ENCODE measurements at regions of chr14 and their contacts with region 1.

Region 1: GRCh38 chr14:24366721-24367513 is 1.1 kb upstream of the NFATC4 start:
- DNase-seq: peak; percentile 87
- H3K4me3 ChIP-seq: peak overlapping the region; percentile 24 to 54 (median 31)
- H3K27ac ChIP-seq: peak overlapping the region; percentile 90
- H3K4me1 ChIP-seq: peaks cover 27% of the 10 kb centered on the region
- H3K27me3 ChIP-seq: peaks cover 0 to 2% of the 10 kb centered on the region in 2 experiments
- CTCF ChIP-seq: no peak
- POLR2A ChIP-seq: peak; percentile 32

Region 2: DNA sequence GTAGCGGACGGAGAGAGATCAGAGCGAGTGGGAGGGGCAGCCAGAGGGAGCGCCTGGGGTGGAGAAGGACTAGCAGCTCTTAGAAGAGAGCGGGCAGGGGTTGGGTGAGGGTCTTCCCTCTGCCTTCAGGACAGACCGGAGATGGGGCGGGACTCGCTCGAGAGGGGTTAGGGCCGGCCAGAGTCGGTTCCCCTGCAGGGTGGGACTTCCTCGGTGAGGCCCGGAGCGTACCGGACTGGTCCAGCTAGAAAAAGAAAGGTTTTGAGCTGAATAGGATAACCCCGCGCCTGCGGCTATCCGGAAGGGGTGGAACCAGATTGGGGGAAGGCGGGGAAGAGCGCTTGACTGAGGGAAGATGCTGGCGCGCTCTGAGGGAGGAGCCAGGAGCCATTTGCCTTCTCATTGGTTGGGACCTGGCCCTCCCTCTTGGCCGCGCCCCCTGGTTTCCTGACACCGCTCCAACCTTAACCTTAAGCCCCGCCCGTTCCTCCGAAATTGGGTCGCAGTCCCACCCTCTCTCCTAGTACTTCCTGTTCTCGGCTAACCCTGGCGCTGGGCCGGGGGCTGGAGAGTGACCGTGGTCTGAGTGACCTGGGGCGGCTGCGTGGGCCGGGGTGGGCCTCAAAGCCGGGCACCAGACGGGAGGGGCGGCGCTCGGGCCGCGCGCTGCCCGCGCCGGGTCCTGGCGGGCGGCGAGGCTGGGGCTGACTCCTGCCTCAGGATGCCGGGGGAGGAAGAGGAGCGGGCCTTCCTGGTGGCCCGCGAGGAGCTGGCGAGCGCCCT is 219.7 kb before region 1 on chr14 and contains the start of gene RNF31:
- CTCF ChIA-PET with region 1: no interaction called
- POLR2A ChIA-PET with region 1: no interaction called
- dilution Hi-C with region 1: no loop called
- intact Hi-C with region 1: loop called (anchors 5 kb)
- DNase-seq: peak; percentile 97
- H3K4me3 ChIP-seq: peak within 1 kb of the TSS; percentile 59 to 86 (median 79)
- H3K27ac ChIP-seq: peak within 1 kb of the TSS; percentile 52
- H3K4me1 ChIP-seq: peaks cover 17% of the 10 kb centered on the region
- H3K27me3 ChIP-seq: no peaks in the 10 kb centered on the region
- CTCF ChIP-seq: no peak
- POLR2A ChIP-seq: peak; percentile 75
- total RNA-seq, gene RNF31: 66.5 and 69.7 TPM in 2 replicates

Region 3: GRCh38 chr14:24332268-24332993 is 34.5 kb before region 1 on chr14:
- CTCF ChIA-PET with region 1: interaction called, 69 read pairs
- POLR2A ChIA-PET with region 1: interaction called, 7 read pairs
- dilution Hi-C with region 1: no loop called
- intact Hi-C with region 1: loop called (anchors 1 kb)
- DNase-seq: peak; percentile 45
- H3K4me3 ChIP-seq: no peak overlapping the region
- H3K27ac ChIP-seq: no peak overlapping the region
- H3K4me1 ChIP-seq: peaks cover 29% of the 10 kb centered on the region
- H3K27me3 ChIP-seq: no peaks in the 10 kb centered on the region
- CTCF ChIP-seq: peak; percentile 55 to 72
- POLR2A ChIP-seq: no peak

Region 4: GRCh38 chr14:24351517-24351916 is 15.4 kb before region 1 on chr14:
- CTCF ChIA-PET with region 1: interaction called, 16 read pairs
- POLR2A ChIA-PET with region 1: no interaction called
- dilution Hi-C with region 1: no loop called
- intact Hi-C with region 1: no loop called
- DNase-seq: peak; percentile 18
- H3K4me3 ChIP-seq: no peak overlapping the region
- H3K27ac ChIP-seq: no peak overlapping the region
- H3K4me1 ChIP-seq: no peaks in the 10 kb centered on the region
- H3K27me3 ChIP-seq: peaks cover 30 to 35% of the 10 kb centered on the region in 2 experiments
- CTCF ChIP-seq: peak in 1 of 2 donors; percentile 5
- POLR2A ChIP-seq: no peak

Region 5: DNA sequence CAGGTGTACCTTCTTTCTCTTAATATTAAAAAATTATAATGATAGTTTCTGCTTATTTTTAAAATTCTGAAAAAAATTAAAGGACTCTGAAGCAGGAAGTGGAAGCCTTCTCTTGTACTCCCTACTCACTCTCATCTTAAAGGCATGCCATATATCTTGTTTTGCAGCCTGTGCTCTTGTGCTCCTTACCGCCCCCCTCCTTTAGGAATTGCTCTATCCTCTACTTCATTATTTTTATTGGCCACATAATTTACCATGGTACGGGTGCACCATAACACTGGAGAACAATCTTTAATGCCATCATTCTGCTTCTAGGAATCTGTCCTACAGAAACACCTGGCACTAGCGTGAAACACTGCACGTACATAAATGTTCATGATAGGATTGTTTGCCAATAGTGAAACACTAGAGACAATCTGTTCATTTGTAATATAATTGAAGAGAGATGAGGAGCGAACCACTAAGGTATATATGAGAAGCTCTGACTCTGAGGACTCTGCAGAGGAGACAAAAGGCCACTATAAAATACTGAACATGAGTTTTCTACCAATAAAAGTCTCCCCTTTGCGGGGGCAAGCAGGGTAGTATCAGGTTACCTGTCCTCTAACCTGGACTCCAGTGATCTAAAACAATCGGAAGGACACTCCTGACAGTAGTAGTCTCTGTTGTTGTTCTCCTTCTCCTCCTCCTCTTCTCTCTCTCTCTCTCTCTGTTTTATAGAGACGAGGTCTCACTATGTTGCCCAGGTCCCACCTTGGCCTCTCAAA is 25.6 kb after region 1 on chr14:
- CTCF ChIA-PET with region 1: interaction called, 13 read pairs
- POLR2A ChIA-PET with region 1: no interaction called
- dilution Hi-C with region 1: no loop called
- intact Hi-C with region 1: loop called (anchors 1 kb)
- DNase-seq: peak; percentile 70
- H3K4me3 ChIP-seq: peak overlapping the region in 1 of 3 experiments; percentile 19
- H3K27ac ChIP-seq: peak overlapping the region; percentile 48
- H3K4me1 ChIP-seq: peaks cover 23% of the 10 kb centered on the region
- H3K27me3 ChIP-seq: peaks cover 0 to 3% of the 10 kb centered on the region in 2 experiments
- CTCF ChIP-seq: peak in 1 of 2 donors; percentile 12
- POLR2A ChIP-seq: no peak

Region 6: GRCh38 chr14:24411443-24412389 is 44.8 kb after region 1 on chr14:
- CTCF ChIA-PET with region 1: interaction called, 86 read pairs
- POLR2A ChIA-PET with region 1: interaction called, 6 read pairs
- dilution Hi-C with region 1: no loop called
- intact Hi-C with region 1: loop called (anchors 1 kb)
- DNase-seq: peak; percentile 70
- H3K4me3 ChIP-seq: no peak overlapping the region
- H3K27ac ChIP-seq: no peak overlapping the region
- H3K4me1 ChIP-seq: no peaks in the 10 kb centered on the region
- H3K27me3 ChIP-seq: no peaks in the 10 kb centered on the region
- CTCF ChIP-seq: peak; percentile 67 to 76
- POLR2A ChIP-seq: no peak

Region 7: GRCh38 chr14:24425704-24426103 is 58.8 kb after region 1 on chr14:
- CTCF ChIA-PET with region 1: interaction called, 254 read pairs
- POLR2A ChIA-PET with region 1: interaction called, 36 read pairs
- dilution Hi-C with region 1: no loop called
- intact Hi-C with region 1: loop called (anchors 1 kb)
- DNase-seq: peak; percentile 83
- H3K4me3 ChIP-seq: peak overlapping the region in 1 of 3 experiments; percentile 22
- H3K27ac ChIP-seq: peak overlapping the region; percentile 97
- H3K4me1 ChIP-seq: peaks cover 48% of the 10 kb centered on the region
- H3K27me3 ChIP-seq: no peaks in the 10 kb centered on the region
- CTCF ChIP-seq: no peak
- POLR2A ChIP-seq: no peak